ENCODE measurements at regions of chr12 and their contacts with region 1.

Region 1: DNA sequence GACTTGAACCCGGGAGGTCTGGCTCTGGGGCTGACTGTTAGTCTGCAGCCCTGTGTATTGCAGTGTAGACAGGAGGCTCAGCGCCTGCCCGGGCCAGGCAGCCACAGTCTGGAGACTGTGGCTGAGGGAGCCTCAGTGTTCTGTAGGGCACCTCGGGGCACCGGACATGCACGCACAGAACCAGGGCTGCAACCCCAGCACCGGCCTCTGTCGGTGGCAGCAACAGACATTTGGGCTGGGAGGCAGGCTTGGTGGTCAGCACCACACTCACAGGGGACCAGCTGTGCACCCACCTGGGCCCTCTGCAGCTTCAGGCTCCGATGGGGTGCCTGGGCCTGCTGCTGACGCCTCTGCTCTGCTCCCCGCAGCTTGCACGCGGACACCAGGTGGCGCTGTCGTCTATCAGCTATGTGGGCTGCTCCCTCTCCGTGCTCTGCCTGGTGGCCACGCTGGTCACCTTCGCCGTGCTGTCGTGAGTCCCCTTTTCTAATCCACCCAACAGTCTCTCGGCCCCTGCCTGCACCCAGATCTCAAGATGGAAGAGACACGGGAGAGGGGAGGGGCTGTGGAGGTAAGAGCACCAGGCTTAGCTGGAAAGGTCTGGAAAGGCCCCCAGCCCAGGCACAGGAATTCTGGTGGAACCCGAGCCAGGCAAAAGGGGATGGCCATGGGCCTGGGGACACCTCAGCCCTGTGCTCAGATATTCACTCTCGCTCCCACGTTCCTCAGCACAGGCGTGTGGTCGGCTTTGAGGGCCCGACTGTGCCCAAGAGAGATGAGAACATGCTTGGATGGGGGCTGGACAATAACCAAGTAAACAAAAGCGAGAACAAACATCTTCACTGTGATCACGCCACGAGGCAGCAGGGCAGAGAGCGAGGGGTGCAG is 151.0 kb downstream of the ADGRD1 start:
- DNase-seq: peak; percentile 4
- H3K4me3 ChIP-seq: no peak overlapping the region
- CTCF ChIP-seq: peak; percentile 79

Region 2: GRCh38 chr12:131046813-131047788 is 57.6 kb before region 1 on chr12:
- in situ Hi-C with region 1: no loop called
- DNase-seq: no peak
- H3K4me3 ChIP-seq: no peak overlapping the region
- CTCF ChIP-seq: no peak

Region 3: GRCh38 chr12:131701705-131702572 is 597.2 kb after region 1 on chr12:
- in situ Hi-C with region 1: loop called (anchors 10 kb)
- DNase-seq: no peak
- H3K4me3 ChIP-seq: no peak overlapping the region
- CTCF ChIP-seq: no peak

Measured in astrocyte of the cerebellum (primary cell).